Right cardiac atrium (tissue), 5 donors: ENCODE measurements at regions of chr6 and their contacts with region 1.

Region 1: DNA sequence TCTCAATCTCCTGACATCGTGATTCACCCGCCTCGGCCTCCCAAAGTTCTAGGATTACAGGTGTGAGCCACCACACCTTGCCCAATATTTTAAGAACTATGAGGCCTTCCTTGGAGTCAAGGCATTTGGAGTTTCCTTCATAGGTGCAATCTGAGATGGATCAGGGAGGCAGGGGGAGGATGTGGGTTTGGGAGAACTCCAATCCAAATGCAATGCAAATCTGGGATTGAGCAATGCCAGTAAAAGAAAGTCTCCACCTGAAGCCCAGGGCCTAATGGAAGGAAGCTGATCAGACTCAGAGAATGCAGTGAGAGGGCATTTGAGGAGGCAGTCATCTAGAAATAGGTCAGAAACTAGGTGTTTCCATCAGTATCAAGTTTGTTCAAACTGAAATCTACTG is 21.2 kb downstream of the RSPH3 start:
- DNase-seq: no peak
- ATAC-seq: no peak
- H3K4me3 ChIP-seq: no peak overlapping the region
- H3K27ac ChIP-seq: no peak overlapping the region
- H3K4me1 ChIP-seq: no peaks in the 10 kb centered on the region
- H3K27me3 ChIP-seq: no peaks in the 10 kb centered on the region

Region 2: DNA sequence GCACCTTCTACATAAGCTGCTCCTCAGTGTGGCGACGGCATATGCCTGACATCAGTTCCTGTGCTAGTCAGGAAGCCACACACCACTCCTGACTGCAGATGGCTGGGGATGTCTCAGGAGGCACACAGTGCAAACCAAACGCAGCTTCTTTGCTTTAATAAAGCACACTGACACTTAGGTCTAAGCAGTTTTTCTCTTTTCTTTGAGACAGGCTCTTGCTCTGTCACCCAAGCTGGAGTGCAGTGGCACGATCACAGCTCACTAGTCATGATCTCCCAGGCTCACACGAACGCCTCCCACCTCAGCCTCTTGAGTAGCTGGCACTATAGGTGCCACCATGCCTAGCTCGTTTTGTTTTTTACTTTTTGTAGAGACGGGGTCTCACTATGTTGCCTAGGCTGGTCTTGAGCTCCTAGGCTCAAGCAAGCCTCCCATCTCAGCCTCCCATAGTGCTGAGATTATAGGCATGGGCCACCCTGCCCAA is 189.3 kb before region 1 on chr6:
- intact Hi-C with region 1: no loop called
- DNase-seq: no peak
- ATAC-seq: peak in 1 of 2 donors; percentile 18
- H3K4me3 ChIP-seq: no peak overlapping the region
- H3K27ac ChIP-seq: no peak overlapping the region
- H3K4me1 ChIP-seq: peaks cover 2% of the 10 kb centered on the region
- H3K27me3 ChIP-seq: no peaks in the 10 kb centered on the region

Region 3: DNA sequence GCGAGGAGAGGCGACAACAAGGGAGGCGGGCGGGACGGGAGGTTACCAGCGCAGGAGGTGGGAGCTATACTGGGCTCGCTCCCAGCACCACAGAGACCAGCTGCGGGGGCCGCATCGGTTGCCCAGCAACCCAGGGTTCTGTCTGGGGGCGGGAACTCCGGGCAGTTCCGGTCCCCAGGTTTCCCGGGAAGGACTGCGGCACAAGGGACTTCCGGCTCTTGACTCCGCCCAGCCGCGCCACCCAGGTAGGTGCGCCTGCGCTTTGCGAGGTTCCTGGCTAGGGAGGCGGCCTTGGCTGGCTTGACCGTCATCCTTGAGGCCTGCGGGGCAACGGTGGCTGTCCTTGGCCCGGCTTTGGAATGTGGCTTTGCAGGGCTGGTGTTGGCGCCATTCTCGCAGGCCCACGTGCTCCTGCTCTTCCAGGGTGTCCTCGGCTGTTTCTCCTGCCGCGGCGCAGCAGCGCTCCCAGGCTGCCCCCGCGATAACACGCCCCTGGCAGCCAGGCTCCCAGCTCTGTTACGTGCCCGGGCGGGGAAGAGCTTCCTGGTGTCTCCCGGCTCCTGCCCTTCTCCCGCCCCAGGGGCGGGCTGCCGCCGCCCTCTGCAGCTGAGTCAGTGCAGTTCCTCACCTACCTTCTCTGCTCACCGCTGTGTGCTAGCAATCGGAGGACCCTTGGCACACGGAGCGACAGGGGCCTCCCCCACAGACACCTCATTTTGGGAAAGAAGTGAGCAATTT is 21.1 kb after region 1 on chr6 and contains the start of gene RSPH3:
- intact Hi-C with region 1: loop called in 1 of 4 experiments (anchors 2 kb)
- DNase-seq: peak; percentile 93 to 97 (median 97)
- ATAC-seq: peak; percentile 97
- H3K4me3 ChIP-seq: peak within 1 kb of the TSS; percentile 51
- H3K27ac ChIP-seq: peak within 1 kb of the TSS; percentile 71
- H3K4me1 ChIP-seq: no peaks in the 10 kb centered on the region
- H3K27me3 ChIP-seq: no peaks in the 10 kb centered on the region
- total RNA-seq, gene RSPH3: 9.6 to 12.1 (median 11.2) TPM